Activated CD4-positive, alpha-beta T cell treated with anti-CD3 and anti-CD28 coated beads, Interleukin-2, amount 10 ng/mL, durations not matched to agents 24 days and 14 days (primary cell): ENCODE measurements at regions of chr22 and their contacts with region 1.

Region 1: DNA sequence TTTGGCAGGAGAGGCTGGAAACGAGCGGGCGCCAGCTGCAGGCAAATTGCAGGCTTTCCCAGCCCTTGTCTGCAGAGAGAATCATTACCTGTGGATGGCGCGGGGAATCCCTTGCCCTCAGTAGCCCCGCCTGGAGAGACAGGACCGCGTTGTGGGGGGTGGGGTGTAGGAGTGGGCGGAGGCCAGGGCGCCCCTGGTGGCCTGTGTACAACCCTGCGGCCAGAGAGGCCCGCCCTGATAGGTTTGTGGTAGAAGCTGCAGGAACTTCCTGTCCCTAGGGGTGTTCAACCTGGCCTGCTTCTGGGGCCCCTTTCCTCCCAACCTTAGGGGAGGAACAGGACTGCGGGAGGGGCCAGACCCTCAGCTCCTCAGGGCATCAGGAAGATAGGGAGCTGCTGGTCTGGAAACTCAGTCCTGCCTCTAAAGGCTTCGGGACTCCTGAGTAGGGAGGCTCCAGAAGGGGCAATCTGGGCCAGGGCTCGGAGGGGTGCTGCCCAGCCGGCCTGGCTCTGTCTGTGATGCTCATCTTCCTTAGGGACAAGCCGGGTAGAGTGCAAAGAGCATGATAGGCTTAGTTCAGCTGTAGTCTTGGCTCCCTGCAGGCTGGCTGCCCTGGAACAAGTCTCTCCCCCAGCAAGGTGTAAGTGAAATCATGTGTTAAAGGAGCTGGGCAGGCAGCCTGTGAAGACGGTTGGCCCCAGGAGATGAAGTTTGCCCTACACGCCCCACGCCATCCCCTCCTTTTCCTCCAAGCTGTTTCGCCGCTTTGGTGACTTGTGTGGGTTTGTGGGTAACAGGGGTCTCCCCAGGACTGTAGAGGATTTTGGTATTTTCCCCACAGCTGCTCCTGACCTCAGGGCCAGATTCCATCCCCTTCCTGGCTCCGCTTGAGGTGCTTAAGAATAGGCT is 24.1 kb upstream of the SUSD2 start:
- DNase-seq: peak; percentile 97
- H3K4me3 Mint-ChIP-seq: peak overlapping the region; percentile 92
- H3K27ac Mint-ChIP-seq: peak overlapping the region; percentile 92
- H3K4me1 Mint-ChIP-seq: peaks cover 65% of the 10 kb centered on the region
- H3K27me3 Mint-ChIP-seq: no peaks in the 10 kb centered on the region

Region 2: DNA sequence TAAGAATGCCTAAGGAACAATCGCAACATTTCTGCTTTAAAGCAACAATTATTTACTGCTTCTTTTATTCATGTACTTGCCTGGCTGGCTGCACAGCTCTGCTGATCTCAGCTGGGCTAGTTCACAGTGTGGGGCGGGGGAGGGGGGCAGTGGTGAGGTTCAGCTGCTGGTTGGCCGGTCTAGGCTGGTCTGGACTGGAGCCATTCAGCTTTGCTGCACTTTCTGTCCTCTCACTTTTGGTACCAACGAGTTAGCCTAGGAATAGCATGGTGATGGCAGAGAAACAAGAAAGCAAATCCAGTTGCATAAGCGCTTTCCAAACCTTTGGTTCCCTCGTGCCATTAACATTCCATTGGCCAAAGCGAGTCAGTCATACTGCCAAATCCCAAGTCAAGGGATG is 278.9 kb before region 1 on chr22:
- intact Hi-C with region 1: no loop called
- DNase-seq: no peak
- H3K4me3 Mint-ChIP-seq: no peak overlapping the region
- H3K27ac Mint-ChIP-seq: no peak overlapping the region
- H3K4me1 Mint-ChIP-seq: no peaks in the 10 kb centered on the region
- H3K27me3 Mint-ChIP-seq: no peaks in the 10 kb centered on the region

Region 3: GRCh38 chr22:24106385-24107381 is 50.5 kb before region 1 on chr22:
- intact Hi-C with region 1: loop called (anchors 5 kb)
- DNase-seq: peak; percentile 73
- H3K4me3 Mint-ChIP-seq: peak overlapping the region; percentile 40
- H3K27ac Mint-ChIP-seq: peak overlapping the region; percentile 82
- H3K4me1 Mint-ChIP-seq: peaks cover 24% of the 10 kb centered on the region
- H3K27me3 Mint-ChIP-seq: no peaks in the 10 kb centered on the region

Region 4: GRCh38 chr22:24140357-24140756 is 16.8 kb before region 1 on chr22:
- intact Hi-C with region 1: loop called (anchors 2 kb)
- DNase-seq: no peak
- H3K4me3 Mint-ChIP-seq: no peak overlapping the region
- H3K27ac Mint-ChIP-seq: no peak overlapping the region
- H3K4me1 Mint-ChIP-seq: peaks cover 32% of the 10 kb centered on the region
- H3K27me3 Mint-ChIP-seq: no peaks in the 10 kb centered on the region